ENCODE measurements at regions of chr3 and their contacts with region 1.

Region 1: GRCh38 chr3:188954590-188955208 is 217.1 kb upstream of the TPRG1 start:
- DNase-seq: peak; percentile 90
- H3K4me3 ChIP-seq: no peak overlapping the region
- H3K27ac ChIP-seq: no peak overlapping the region
- H3K4me1 ChIP-seq: no peaks in the 10 kb centered on the region
- H3K27me3 ChIP-seq: no peaks in the 10 kb centered on the region
- CTCF ChIP-seq: peak; percentile 94

Region 2: GRCh38 chr3:188052169-188053030 is 902.3 kb before region 1 on chr3:
- intact Hi-C with region 1: loop called (anchors 10 kb)
- DNase-seq: peak; percentile 57
- H3K4me3 ChIP-seq: no peak overlapping the region
- H3K27ac ChIP-seq: peak overlapping the region; percentile 46
- H3K4me1 ChIP-seq: no peaks in the 10 kb centered on the region
- H3K27me3 ChIP-seq: no peaks in the 10 kb centered on the region
- CTCF ChIP-seq: no peak

Region 3: DNA sequence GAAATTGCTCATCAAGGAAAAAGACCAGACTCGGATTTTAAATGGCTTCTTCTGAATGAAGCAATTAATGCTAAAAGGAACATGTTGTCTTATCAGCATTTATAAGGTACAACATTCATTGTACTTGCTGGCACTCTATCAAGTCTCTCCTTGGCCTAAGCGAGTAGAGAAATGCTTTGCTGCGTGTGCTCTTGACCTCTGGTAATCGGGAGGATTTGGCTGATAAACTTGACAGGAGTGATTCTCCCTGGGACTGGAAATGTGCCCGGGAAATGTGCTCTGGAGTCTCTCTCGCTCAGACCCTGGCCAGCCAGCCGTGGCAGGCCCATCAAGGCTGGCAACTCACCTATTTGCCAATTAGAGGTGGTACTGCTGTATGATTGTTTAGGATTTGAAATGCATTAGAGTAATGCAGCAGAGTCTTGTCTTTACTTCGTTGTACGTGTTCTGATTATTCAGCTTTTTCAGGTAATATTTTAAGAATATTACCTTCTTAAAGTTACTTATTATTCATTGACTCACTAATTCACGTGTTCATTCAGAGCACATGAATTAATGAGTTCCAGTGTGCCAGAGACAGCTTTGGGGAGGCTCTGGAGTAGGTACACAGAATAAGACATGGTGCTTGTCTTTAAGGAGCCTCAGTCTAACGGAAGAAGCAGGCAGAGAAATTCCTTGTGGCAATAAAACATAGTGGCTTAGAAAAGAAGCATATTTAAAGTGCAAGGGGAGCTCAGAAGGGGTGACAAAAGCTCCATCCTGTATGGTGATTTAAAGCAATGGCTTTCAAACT is 169.1 kb after region 1 on chr3:
- intact Hi-C with region 1: no loop called
- DNase-seq: no peak
- H3K4me3 ChIP-seq: no peak overlapping the region
- H3K27ac ChIP-seq: no peak overlapping the region
- H3K4me1 ChIP-seq: no peaks in the 10 kb centered on the region
- H3K27me3 ChIP-seq: no peaks in the 10 kb centered on the region
- CTCF ChIP-seq: no peak

Region 4: GRCh38 chr3:189148081-189148507 is 193.4 kb after region 1 on chr3:
- intact Hi-C with region 1: loop called (anchors 2 kb)
- DNase-seq: peak; percentile 76
- H3K4me3 ChIP-seq: no peak overlapping the region
- H3K27ac ChIP-seq: no peak overlapping the region
- H3K4me1 ChIP-seq: no peaks in the 10 kb centered on the region
- H3K27me3 ChIP-seq: no peaks in the 10 kb centered on the region
- CTCF ChIP-seq: peak; percentile 65